ENCODE measurements at regions of chr2 and their contacts with region 1.

Region 1: GRCh38 chr2:191501561-191502168 is 176.3 kb upstream of the NABP1 start:
- DNase-seq: no peak
- ATAC-seq: peak; percentile 73

Region 2: GRCh38 chr2:191245046-191245868 is 256.4 kb before region 1 on chr2 and contains the start of gene MYO1B:
- intact Hi-C with region 1: loop called (anchors 5 kb)
- DNase-seq: peak; percentile 77
- ATAC-seq: peak; percentile 55
- total RNA-seq, gene MYO1B: 74.9 TPM

Measured in sciatic nerve (tissue), 2 donors.